ENCODE measurements at regions of chr22 and their contacts with region 1.

Region 1: GRCh38 chr22:36304452-36305158 is 51.7 kb downstream of the APOL1 start:
- DNase-seq: no peak
- CTCF ChIP-seq: no peak

Region 2: DNA sequence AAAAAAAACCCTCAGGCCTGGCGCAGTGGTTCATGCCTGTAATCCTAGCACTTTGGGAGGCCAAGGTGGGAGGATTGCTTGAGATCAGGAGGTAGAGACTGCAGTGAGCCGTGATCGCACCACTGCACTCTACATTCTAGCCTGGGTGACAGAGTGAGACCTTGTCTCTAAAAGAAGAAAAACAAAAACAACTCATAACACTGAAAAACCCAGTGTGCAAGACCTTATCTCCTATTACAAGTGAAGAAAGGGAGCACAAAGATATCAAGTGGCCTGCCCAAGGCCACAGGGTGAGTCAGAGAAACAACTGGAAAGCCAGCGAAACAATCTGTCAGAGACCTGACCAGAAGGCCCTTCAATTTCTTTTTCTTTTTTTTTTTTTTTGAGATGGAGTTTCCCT is 174.4 kb after region 1 on chr22:
- in situ Hi-C with region 1: loop called (anchors 5 kb)
- DNase-seq: no peak
- CTCF ChIP-seq: no peak

Measured in GM13976 (cell line).